CD8-positive, alpha-beta T cell (primary cell): ENCODE measurements at regions of chr16 and their contacts with region 1.

Region 1: DNA sequence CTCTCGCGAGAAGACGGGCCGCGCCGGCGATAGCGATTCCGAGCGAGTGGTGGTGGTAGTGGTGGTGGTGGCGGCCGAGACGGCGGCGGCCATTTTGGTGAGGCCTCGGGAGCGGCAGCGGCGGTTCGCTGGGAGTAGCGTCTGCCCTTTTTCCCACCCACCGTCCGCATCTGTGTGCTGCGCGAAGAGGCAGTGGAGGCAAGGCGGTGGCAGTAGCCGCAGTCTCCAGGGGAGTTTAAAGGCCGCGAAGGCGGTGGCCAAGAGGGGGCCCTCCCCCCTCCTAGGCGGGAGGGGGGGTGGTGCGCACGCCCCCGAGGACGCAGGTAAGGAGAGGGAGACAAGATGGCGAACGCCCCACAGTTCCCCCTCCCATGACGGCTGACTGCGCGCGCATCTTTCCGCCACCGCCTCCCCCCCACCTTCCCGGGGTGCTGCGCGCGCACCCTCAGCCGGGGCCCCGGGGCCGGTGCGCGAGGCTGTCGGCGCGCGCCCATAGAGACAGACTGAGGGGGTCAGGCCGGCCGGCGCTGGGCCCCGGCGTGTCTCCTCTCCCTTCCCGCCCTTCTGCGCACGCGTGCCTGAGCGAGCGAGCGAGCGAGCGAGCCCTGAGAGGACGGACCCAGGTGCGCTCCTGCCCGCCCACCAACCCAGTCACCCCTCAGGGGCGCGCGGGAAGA is 694 bp upstream of the SRCAP start:
- DNase-seq: peak; percentile 96 to 99 (median 99)
- ATAC-seq: peak; percentile 74
- H3K4me3 ChIP-seq: peak overlapping the region; percentile 84 to 99
- H3K4me3 Mint-ChIP-seq: peak overlapping the region; percentile 97
- H3K27ac ChIP-seq: peak overlapping the region; percentile 98 to 100
- H3K27ac Mint-ChIP-seq: peak overlapping the region; percentile 100
- H3K4me1 ChIP-seq: peaks cover 24% of the 10 kb centered on the region
- H3K4me1 Mint-ChIP-seq: peaks cover 35% of the 10 kb centered on the region
- H3K27me3 ChIP-seq: no peaks in the 10 kb centered on the region
- H3K27me3 Mint-ChIP-seq: no peaks in the 10 kb centered on the region
- CTCF ChIP-seq: no peak

Region 2: GRCh38 chr16:30091474-30092372 is 606.6 kb before region 1 on chr16 and contains the start of gene TBX6:
- CTCF ChIA-PET with region 1: no interaction called
- POLR2A ChIA-PET with region 1: no interaction called
- intact Hi-C with region 1: loop called in 1 of 2 experiments (anchors 10 kb)
- DNase-seq: peak; percentile 86 to 97 (median 92)
- ATAC-seq: peak; percentile 82
- H3K4me3 ChIP-seq: peak within 1 kb of the TSS; percentile 59 to 69
- H3K4me3 Mint-ChIP-seq: peak within 1 kb of the TSS; percentile 87
- H3K27ac ChIP-seq: peak within 1 kb of the TSS; percentile 58 to 69
- H3K27ac Mint-ChIP-seq: peak within 1 kb of the TSS; percentile 91
- H3K4me1 ChIP-seq: peaks cover 55% of the 10 kb centered on the region
- H3K4me1 Mint-ChIP-seq: peaks cover 48% of the 10 kb centered on the region
- H3K27me3 ChIP-seq: no peaks in the 10 kb centered on the region
- H3K27me3 Mint-ChIP-seq: no peaks in the 10 kb centered on the region
- CTCF ChIP-seq: peak; percentile 73
- total RNA-seq, gene TBX6: 0.16 to 0.22 TPM

Region 3: DNA sequence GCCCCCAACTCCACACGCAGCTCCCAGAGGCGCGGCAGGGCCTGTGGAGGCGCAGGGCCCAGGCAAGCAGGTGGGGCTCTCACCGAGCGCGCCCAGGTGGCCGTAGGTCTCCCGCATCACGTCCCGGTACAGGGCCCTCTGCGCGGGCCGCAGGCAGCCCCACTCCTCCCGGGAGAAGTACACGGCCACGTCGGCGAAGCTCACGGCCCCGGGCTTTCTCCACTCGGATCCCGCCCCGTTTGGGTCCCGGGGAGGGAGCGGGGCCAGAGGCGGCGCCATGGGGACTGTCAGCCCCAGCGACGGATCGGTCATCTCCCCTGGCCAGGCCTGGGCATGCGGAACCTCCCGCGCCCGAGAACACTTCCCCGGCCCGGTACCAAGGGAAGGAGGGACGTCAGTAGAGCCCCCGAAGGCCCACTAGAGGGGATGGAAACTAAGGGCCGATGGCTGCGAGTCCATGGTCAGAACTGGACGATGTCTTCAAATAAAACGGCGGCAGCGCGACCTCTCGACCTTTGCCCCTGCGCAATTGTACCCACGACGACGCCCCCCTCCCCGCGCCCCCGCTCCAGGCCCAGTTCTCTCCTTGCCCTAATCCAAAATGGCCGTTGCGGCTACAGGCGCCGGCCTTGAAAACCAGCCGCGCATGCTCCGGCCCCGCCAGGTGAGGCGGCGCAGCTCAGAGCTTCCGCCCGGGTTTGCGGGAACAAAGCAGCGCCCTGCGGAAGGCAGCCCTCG is 163.7 kb before region 1 on chr16 and contains the start of gene ZNF747:
- CTCF ChIA-PET with region 1: interaction called, 4 read pairs
- POLR2A ChIA-PET with region 1: no interaction called
- intact Hi-C with region 1: loop called (anchors 1 to 5 kb)
- DNase-seq: peak; percentile 77 to 95 (median 92)
- ATAC-seq: peak; percentile 80
- H3K4me3 ChIP-seq: peak within 1 kb of the TSS; percentile 82 to 96
- H3K4me3 Mint-ChIP-seq: peak within 1 kb of the TSS; percentile 89
- H3K27ac ChIP-seq: peak within 1 kb of the TSS; percentile 77 to 97
- H3K27ac Mint-ChIP-seq: peak within 1 kb of the TSS; percentile 96
- H3K4me1 ChIP-seq: peaks cover 13% of the 10 kb centered on the region
- H3K4me1 Mint-ChIP-seq: peaks cover 38% of the 10 kb centered on the region
- H3K27me3 ChIP-seq: no peaks in the 10 kb centered on the region
- H3K27me3 Mint-ChIP-seq: no peaks in the 10 kb centered on the region
- CTCF ChIP-seq: no peak
- total RNA-seq, gene ZNF747: 6.2 to 6.3 TPM

Region 4: GRCh38 chr16:30609926-30610839 is 88.1 kb before region 1 on chr16 and contains the start of gene ZNF689:
- CTCF ChIA-PET with region 1: interaction called, 5 read pairs
- POLR2A ChIA-PET with region 1: interaction called, 3 read pairs
- intact Hi-C with region 1: loop called (anchors 1 kb)
- DNase-seq: peak; percentile 90 to 98 (median 94)
- ATAC-seq: peak; percentile 88
- H3K4me3 ChIP-seq: peak within 1 kb of the TSS; percentile 69 to 93
- H3K4me3 Mint-ChIP-seq: peak within 1 kb of the TSS; percentile 95
- H3K27ac ChIP-seq: peak within 1 kb of the TSS; percentile 91 to 93
- H3K27ac Mint-ChIP-seq: peak within 1 kb of the TSS; percentile 98
- H3K4me1 ChIP-seq: peaks cover 12% of the 10 kb centered on the region
- H3K4me1 Mint-ChIP-seq: peaks cover 24% of the 10 kb centered on the region
- H3K27me3 ChIP-seq: peaks cover 0 to 2% of the 10 kb centered on the region in 2 experiments
- H3K27me3 Mint-ChIP-seq: no peaks in the 10 kb centered on the region
- CTCF ChIP-seq: no peak
- total RNA-seq, gene ZNF689: 15.6 to 17.5 TPM

Region 5: GRCh38 chr16:30715737-30716445 is 17.6 kb after region 1 on chr16:
- CTCF ChIA-PET with region 1: no interaction called
- POLR2A ChIA-PET with region 1: interaction called, 3 read pairs
- intact Hi-C with region 1: loop called (anchors 1 to 2 kb)
- DNase-seq: peak in 8 of 9 experiments; percentile 25 to 84 (median 49)
- ATAC-seq: peak; percentile 96
- H3K4me3 ChIP-seq: no peak overlapping the region
- H3K4me3 Mint-ChIP-seq: peak overlapping the region; percentile 55
- H3K27ac ChIP-seq: peak overlapping the region; percentile 23 to 67
- H3K27ac Mint-ChIP-seq: peak overlapping the region; percentile 95
- H3K4me1 ChIP-seq: peaks cover 18% of the 10 kb centered on the region
- H3K4me1 Mint-ChIP-seq: peaks cover 35% of the 10 kb centered on the region
- H3K27me3 ChIP-seq: no peaks in the 10 kb centered on the region
- H3K27me3 Mint-ChIP-seq: no peaks in the 10 kb centered on the region
- CTCF ChIP-seq: no peak

Region 6: DNA sequence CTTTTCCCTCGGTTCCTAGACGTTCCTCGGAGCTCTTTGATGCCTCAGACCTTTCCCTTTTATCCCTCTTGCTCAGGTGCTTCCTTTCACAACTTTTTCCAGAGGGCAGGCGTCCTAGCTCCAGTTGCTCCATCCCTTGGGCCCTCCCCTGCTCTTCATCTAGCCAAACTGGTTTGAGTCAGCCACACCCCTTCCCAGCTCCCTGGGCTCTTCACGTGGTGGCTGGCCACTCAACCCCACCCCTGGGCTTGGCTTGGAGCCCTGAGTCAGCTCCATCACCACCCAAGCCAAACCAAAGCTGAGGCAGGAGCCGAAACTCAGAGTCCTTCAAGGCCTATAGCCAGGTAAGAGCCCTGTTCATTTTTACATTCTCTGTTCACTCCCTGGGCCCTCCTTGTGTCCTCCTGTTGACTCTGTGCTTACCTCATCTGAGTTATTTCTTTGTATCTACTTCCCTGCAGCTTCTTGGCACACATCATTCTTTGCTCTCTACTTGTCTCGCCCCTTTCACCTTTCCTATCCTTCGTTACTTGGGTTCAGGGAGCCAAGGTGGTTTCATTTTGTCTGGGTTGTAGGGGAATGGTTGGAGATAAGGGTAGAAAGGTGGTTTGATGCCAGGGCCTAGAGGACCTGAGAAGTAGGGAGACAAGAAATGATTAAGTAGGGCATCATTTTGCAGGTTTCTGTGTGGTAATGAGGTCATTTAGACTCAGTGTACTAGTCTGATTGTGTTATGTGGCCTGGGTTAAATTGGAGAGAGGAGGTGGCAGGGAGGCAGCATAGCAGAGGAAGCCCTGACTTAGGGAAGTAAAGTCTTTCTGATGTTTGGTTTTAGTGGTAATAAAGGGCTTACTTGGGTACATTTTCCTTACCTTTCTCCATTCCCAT is 42.3 kb after region 1 on chr16:
- CTCF ChIA-PET with region 1: no interaction called
- POLR2A ChIA-PET with region 1: no interaction called
- intact Hi-C with region 1: no loop called
- DNase-seq: no peak
- ATAC-seq: no peak
- H3K4me3 ChIP-seq: no peak overlapping the region
- H3K4me3 Mint-ChIP-seq: no peak overlapping the region
- H3K27ac ChIP-seq: no peak overlapping the region
- H3K27ac Mint-ChIP-seq: peak overlapping the region; percentile 84
- H3K4me1 ChIP-seq: no peaks in the 10 kb centered on the region
- H3K4me1 Mint-ChIP-seq: peaks cover 5% of the 10 kb centered on the region
- H3K27me3 ChIP-seq: no peaks in the 10 kb centered on the region
- H3K27me3 Mint-ChIP-seq: no peaks in the 10 kb centered on the region
- CTCF ChIP-seq: no peak

Region 7: GRCh38 chr16:30813821-30814189 is 115.5 kb after region 1 on chr16:
- CTCF ChIA-PET with region 1: no interaction called
- POLR2A ChIA-PET with region 1: interaction called, 5 read pairs
- intact Hi-C with region 1: loop called in 1 of 2 experiments (anchors 2 kb)
- DNase-seq: no peak
- ATAC-seq: peak; percentile 2
- H3K4me3 ChIP-seq: peak overlapping the region; percentile 49 to 56
- H3K4me3 Mint-ChIP-seq: peak overlapping the region; percentile 82
- H3K27ac ChIP-seq: peak overlapping the region; percentile 72
- H3K27ac Mint-ChIP-seq: peak overlapping the region; percentile 88
- H3K4me1 ChIP-seq: peaks cover 18% of the 10 kb centered on the region
- H3K4me1 Mint-ChIP-seq: peaks cover 9% of the 10 kb centered on the region
- H3K27me3 ChIP-seq: no peaks in the 10 kb centered on the region
- H3K27me3 Mint-ChIP-seq: no peaks in the 10 kb centered on the region
- CTCF ChIP-seq: no peak